B cell (primary cell): ENCODE measurements at regions of chr6 and their contacts with region 1.

Region 1: GRCh38 chr6:17803409-17803808 is 96.7 kb upstream of the NUP153 start:
- DNase-seq: no peak
- ATAC-seq: no peak
- H3K4me3 ChIP-seq: no peak overlapping the region
- H3K4me3 Mint-ChIP-seq: no peak overlapping the region
- H3K27ac ChIP-seq: no peak overlapping the region
- H3K27ac Mint-ChIP-seq: no peak overlapping the region
- H3K4me1 ChIP-seq: no peaks in the 10 kb centered on the region
- H3K4me1 Mint-ChIP-seq: no peaks in the 10 kb centered on the region
- H3K27me3 ChIP-seq: no peaks in the 10 kb centered on the region
- H3K27me3 Mint-ChIP-seq: no peaks in the 10 kb centered on the region
- CTCF ChIP-seq: no peak

Region 2: DNA sequence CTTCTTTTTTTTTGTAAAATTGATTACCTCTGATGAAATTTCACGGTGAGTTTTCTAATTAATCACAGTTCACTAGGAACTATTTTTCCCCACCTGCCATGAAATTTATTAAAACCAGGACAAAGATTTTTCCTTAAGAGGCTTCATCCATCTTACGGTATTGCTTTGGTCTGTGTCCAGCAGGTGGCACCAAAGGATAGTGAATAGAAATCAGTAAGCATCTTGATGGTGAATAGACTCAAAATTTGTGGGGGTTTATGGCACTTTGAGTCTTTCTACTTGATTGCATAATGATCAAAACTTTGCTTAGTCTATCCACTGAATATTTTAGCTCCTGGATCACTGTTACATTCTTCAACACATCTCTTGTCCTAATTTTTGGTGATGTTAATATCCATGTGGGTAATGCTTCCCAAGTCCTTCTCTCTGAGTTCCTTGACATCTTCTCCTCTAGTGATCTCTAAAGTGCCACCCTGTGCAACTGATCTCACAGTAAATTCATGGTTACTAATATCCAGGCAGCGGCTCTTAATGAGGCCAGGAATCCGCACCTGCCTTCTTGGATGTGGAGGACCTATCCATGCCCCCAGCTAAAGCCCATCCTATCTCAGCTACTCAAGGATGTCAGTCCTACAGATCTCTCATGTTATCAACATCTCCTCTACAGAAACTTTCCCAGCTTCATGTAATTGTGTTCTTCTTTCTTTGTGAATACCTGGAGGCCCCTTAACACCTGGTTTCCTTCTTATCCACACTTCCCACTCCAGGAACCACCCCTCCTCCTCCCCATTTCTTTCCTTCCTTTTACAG is 647.1 kb before region 1 on chr6:
- CTCF ChIA-PET with region 1: interaction called, 11 read pairs
- POLR2A ChIA-PET with region 1: no interaction called
- intact Hi-C with region 1: no loop called
- DNase-seq: peak; percentile 70
- ATAC-seq: no peak
- H3K4me3 ChIP-seq: no peak overlapping the region
- H3K4me3 Mint-ChIP-seq: no peak overlapping the region
- H3K27ac ChIP-seq: no peak overlapping the region
- H3K27ac Mint-ChIP-seq: no peak overlapping the region
- H3K4me1 ChIP-seq: no peaks in the 10 kb centered on the region
- H3K4me1 Mint-ChIP-seq: no peaks in the 10 kb centered on the region
- H3K27me3 ChIP-seq: no peaks in the 10 kb centered on the region
- H3K27me3 Mint-ChIP-seq: peaks cover 12% of the 10 kb centered on the region
- CTCF ChIP-seq: peak; percentile 90

Region 3: GRCh38 chr6:17584241-17584803 is 219.1 kb before region 1 on chr6:
- CTCF ChIA-PET with region 1: interaction called, 38 read pairs
- POLR2A ChIA-PET with region 1: no interaction called
- intact Hi-C with region 1: loop called (anchors 1 kb)
- DNase-seq: peak; percentile 49
- ATAC-seq: peak; percentile 50
- H3K4me3 ChIP-seq: no peak overlapping the region
- H3K4me3 Mint-ChIP-seq: no peak overlapping the region
- H3K27ac ChIP-seq: no peak overlapping the region
- H3K27ac Mint-ChIP-seq: no peak overlapping the region
- H3K4me1 ChIP-seq: no peaks in the 10 kb centered on the region
- H3K4me1 Mint-ChIP-seq: no peaks in the 10 kb centered on the region
- H3K27me3 ChIP-seq: peaks cover 0 to 3% (median 0%) of the 10 kb centered on the region in 4 experiments
- H3K27me3 Mint-ChIP-seq: peaks cover 7% of the 10 kb centered on the region
- CTCF ChIP-seq: peak; percentile 82

Region 4: DNA sequence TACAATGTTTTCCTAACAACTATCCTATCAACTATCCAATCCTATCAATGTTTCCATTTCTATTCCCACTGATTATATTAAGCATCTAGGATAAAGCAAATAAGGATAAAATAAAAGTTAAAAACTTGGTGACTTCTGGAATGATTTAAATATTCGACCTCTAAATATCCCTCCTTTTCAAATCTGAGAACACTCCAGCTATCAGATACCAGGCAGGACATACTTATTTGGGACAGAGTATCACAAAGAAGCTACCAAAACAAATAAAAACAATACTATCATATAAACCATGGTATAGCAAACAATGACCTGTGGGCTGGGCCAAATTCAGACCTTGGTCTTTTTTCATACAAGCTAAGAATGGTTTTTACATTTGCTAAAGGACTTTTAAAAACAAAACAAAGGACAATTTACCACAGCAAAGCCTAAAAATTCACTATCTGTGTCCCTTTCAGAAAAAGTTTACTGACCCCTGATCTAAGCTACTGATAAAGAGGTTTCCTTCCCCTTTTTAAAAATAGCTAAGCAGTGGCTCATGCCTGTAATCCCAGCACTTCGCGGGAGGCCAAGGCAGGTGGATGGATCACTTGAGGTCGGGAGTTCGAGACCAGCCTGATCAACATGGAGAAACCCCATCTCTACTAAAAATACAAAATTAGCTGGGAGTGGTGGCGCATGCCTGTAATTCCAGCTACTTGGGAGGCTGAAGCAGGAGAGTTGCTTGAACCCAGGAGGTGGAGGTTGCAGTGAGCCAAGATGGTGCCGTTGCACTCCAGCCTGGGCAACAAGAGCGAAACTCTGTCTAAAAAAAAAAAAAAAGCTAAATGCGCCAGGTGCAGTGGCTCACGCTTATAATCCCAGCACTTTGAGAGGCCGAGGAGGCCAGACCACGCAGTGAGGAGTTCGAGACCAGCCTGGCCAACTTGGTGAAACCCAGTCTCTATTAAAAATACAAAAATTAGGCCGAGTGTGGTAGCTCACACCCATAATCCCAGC is 102.7 kb before region 1 on chr6:
- CTCF ChIA-PET with region 1: interaction called, 21 read pairs
- POLR2A ChIA-PET with region 1: no interaction called
- intact Hi-C with region 1: no loop called
- DNase-seq: no peak
- ATAC-seq: no peak
- H3K4me3 ChIP-seq: no peak overlapping the region
- H3K4me3 Mint-ChIP-seq: peak overlapping the region; percentile 60
- H3K27ac ChIP-seq: peak overlapping the region in 1 of 2 donors; percentile 58
- H3K27ac Mint-ChIP-seq: peak overlapping the region; percentile 79
- H3K4me1 ChIP-seq: peaks cover 50 to 56% of the 10 kb centered on the region in 2 donors
- H3K4me1 Mint-ChIP-seq: peaks cover 55% of the 10 kb centered on the region
- H3K27me3 ChIP-seq: no peaks in the 10 kb centered on the region
- H3K27me3 Mint-ChIP-seq: no peaks in the 10 kb centered on the region
- CTCF ChIP-seq: no peak

Region 5: DNA sequence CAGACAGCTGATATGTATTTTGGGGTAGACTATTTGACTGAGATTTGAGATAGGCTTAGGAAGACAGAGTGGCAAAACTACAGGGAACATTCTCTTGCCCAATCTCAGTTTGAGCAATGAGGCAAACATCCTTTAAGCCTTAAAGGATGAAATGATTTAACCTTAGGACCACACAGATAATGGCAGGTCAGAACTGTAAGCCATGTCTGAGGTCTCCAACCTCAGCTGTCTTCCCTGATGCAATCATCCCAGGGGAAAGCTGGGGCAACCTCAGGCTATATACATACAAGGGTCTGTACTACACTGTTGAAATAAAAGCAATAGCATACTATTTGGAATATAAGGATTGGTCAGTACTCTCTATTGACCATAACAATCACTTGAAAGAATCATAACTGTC is 12.9 kb before region 1 on chr6:
- CTCF ChIA-PET with region 1: interaction called, 12 read pairs
- POLR2A ChIA-PET with region 1: no interaction called
- intact Hi-C with region 1: no loop called
- DNase-seq: no peak
- ATAC-seq: no peak
- H3K4me3 ChIP-seq: no peak overlapping the region
- H3K4me3 Mint-ChIP-seq: no peak overlapping the region
- H3K27ac ChIP-seq: no peak overlapping the region
- H3K27ac Mint-ChIP-seq: no peak overlapping the region
- H3K4me1 ChIP-seq: no peaks in the 10 kb centered on the region
- H3K4me1 Mint-ChIP-seq: no peaks in the 10 kb centered on the region
- H3K27me3 ChIP-seq: no peaks in the 10 kb centered on the region
- H3K27me3 Mint-ChIP-seq: no peaks in the 10 kb centered on the region
- CTCF ChIP-seq: no peak

Region 6: DNA sequence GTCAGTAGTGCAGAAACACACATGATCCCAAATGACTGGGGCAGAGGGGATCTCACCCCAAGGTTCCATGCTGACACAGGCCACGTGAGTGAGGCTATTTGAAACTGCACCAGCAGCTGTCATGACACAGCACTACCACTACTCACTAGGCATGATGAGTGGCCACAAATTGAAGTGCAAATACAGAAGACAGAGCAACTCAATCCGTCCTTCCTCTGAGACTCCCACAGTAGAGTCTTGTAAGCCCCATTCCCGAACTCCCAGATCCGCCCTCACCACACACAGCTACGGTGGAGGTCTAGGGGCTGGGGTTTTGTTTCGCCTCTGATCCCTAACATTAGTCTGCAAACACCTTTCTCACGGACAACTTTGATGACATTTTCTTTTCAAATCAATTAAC is 16.6 kb after region 1 on chr6:
- CTCF ChIA-PET with region 1: interaction called, 40 read pairs
- POLR2A ChIA-PET with region 1: no interaction called
- intact Hi-C with region 1: no loop called
- DNase-seq: no peak
- ATAC-seq: no peak
- H3K4me3 ChIP-seq: no peak overlapping the region
- H3K4me3 Mint-ChIP-seq: no peak overlapping the region
- H3K27ac ChIP-seq: no peak overlapping the region
- H3K27ac Mint-ChIP-seq: no peak overlapping the region
- H3K4me1 ChIP-seq: no peaks in the 10 kb centered on the region
- H3K4me1 Mint-ChIP-seq: no peaks in the 10 kb centered on the region
- H3K27me3 ChIP-seq: no peaks in the 10 kb centered on the region
- H3K27me3 Mint-ChIP-seq: no peaks in the 10 kb centered on the region
- CTCF ChIP-seq: no peak